ENCODE measurements at regions of chr15 and their contacts with region 1.

Region 1: DNA sequence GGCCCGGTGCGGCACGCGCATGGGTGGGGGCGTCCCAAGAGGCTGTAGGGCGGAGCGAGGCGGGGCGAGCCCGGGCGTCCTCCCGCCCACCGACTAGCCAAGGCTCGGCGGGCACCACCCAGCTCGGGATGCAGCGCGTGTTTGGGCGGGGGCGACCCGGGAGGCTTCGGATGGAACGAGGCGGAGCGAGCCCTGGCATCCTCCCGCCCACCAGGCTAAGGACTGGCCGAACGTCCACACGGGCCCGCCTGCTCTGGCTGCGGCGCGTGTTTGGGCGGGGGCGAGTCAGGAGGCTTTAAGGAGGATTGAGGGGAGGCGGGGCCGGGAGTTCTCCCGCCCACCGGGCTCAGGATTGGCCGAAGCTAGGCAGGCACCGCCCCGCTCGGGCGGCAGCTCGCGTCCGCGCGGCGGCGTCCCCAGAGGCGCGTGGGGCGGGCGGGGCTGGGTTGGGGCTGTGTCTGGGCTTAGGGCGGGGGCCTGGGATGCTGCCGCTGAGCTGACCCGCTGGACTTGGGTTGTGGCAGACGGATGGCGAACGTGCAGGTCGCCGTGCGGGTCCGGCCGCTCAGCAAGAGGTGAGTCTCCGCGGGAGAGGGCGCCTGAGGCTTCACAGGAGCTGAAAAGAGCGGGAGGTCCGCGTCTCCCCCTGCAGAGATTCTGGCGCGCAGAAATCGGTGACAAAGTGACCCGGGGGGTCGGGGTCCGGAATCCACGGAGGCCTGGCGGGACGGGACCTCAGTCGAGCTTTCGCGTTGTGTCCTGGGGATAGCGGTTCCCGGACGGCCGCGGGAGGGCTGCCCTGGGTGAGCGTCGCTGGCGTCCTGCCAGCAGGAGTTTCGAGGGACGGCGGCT is at the start of gene STARD9:
- DNase-seq: peak; percentile 94 to 99 (median 99)

Region 2: DNA sequence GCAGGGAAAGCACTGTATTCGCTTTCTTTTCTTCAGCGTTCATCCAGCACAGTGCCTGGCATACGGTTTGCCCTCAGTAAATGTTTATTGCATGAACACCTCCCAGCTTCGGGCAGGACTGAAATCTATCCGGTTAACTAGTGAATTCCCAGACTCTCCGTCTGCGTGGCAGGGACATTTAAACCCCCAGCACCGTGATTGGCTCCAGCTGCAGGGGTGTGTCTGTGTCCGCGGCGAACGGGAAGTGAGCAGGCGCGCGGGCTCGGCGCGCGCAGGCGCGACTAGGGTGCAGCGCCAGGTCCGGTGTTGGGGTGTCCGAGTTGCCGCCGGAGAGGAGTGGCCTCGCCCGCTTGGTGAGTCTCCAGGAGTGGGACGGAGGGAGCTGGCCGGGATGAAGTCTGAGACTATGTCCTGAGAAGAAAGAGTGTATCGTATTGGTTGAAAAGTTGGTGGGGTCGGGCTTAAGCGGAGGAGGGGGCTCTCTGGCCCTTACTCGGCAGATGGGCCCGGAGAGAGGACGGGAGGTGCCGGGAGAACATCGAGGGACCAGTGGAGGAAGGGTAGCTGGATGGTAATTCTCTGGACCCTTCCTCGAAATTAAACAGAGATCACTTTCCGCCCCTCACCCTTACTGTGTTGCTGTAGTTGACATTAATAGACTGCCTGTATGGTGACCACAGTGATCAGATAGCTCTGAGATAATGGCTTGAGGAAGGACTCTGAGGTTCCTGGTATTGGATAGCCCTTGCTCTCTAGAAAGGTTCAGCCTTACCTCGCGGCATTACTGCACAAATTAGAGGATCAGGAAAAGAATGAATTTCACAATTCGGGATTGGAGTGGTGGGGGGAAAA is 79.8 kb before region 1 on chr15 and contains the start of gene SNAP23:
- intact Hi-C with region 1: loop called (anchors 5 kb)
- DNase-seq: peak; percentile 83 to 96 (median 92)

Region 3: GRCh38 chr15:42650208-42651066 is 75.0 kb after region 1 on chr15:
- intact Hi-C with region 1: loop called (anchors 5 kb)
- DNase-seq: peak in 39 of 42 donors; percentile 10 to 88 (median 63)